ENCODE measurements at regions of chr2 and their contacts with region 1.

Region 1: GRCh38 chr2:27241761-27242613 is 20.9 kb downstream of the SLC30A3 start:
- DNase-seq: peak in 1 of 9 experiments; percentile 25
- ATAC-seq: no peak
- H3K4me3 ChIP-seq: no peak overlapping the region
- H3K4me3 Mint-ChIP-seq: no peak overlapping the region
- H3K27ac ChIP-seq: peak overlapping the region in 1 of 2 experiments; percentile 4
- H3K27ac Mint-ChIP-seq: peak overlapping the region; percentile 41
- H3K4me1 ChIP-seq: peaks cover 4% of the 10 kb centered on the region
- H3K4me1 Mint-ChIP-seq: peaks cover 2% of the 10 kb centered on the region
- H3K27me3 ChIP-seq: no peaks in the 10 kb centered on the region
- H3K27me3 Mint-ChIP-seq: no peaks in the 10 kb centered on the region
- CTCF ChIP-seq: no peak

Region 2: GRCh38 chr2:26820932-26821331 is 421.1 kb before region 1 on chr2:
- CTCF ChIA-PET with region 1: no interaction called
- POLR2A ChIA-PET with region 1: no interaction called
- intact Hi-C with region 1: no loop called
- DNase-seq: no peak
- ATAC-seq: no peak
- H3K4me3 ChIP-seq: no peak overlapping the region
- H3K4me3 Mint-ChIP-seq: no peak overlapping the region
- H3K27ac ChIP-seq: no peak overlapping the region
- H3K27ac Mint-ChIP-seq: no peak overlapping the region
- H3K4me1 ChIP-seq: no peaks in the 10 kb centered on the region
- H3K4me1 Mint-ChIP-seq: no peaks in the 10 kb centered on the region
- H3K27me3 ChIP-seq: no peaks in the 10 kb centered on the region
- H3K27me3 Mint-ChIP-seq: peaks cover 5% of the 10 kb centered on the region
- CTCF ChIP-seq: no peak

Region 3: GRCh38 chr2:27264753-27265535 is 23.0 kb after region 1 on chr2:
- CTCF ChIA-PET with region 1: interaction called, 11 read pairs
- POLR2A ChIA-PET with region 1: no interaction called
- intact Hi-C with region 1: no loop called
- DNase-seq: peak; percentile 34 to 89 (median 64)
- ATAC-seq: peak; percentile 66
- H3K4me3 ChIP-seq: peak overlapping the region; percentile 48 to 55
- H3K4me3 Mint-ChIP-seq: peak overlapping the region; percentile 77
- H3K27ac ChIP-seq: no peak overlapping the region
- H3K27ac Mint-ChIP-seq: no peak overlapping the region
- H3K4me1 ChIP-seq: peaks cover 24% of the 10 kb centered on the region
- H3K4me1 Mint-ChIP-seq: peaks cover 26% of the 10 kb centered on the region
- H3K27me3 ChIP-seq: peaks cover 26 to 34% of the 10 kb centered on the region in 2 experiments
- H3K27me3 Mint-ChIP-seq: peaks cover 38% of the 10 kb centered on the region
- CTCF ChIP-seq: peak; percentile 54